ENCODE measurements at regions of chr14 and their contacts with region 1.

Region 1: DNA sequence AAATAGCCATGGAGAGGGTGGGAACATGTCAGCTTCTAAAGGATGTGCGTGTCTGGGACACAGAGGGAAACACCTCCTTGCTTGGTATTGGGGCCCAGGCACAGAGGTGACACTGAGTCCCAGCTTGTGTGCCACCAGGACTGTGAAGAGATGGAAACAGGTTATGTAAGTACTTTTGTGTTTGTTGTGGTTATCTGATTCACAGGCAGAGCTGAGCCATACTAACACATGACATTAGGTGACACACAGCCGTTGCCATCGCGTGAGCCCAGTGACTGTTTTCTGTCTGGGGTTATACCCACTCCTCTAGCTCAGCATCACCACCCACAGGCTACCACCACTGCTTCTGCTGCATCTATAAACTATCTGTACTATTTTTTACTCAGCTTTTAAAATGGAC is 12.1 kb upstream of the FLVCR2 start:
- DNase-seq: peak; percentile 84
- H3K4me3 Mint-ChIP-seq: peak overlapping the region; percentile 21
- H3K27ac Mint-ChIP-seq: peak overlapping the region; percentile 74
- H3K4me1 Mint-ChIP-seq: peaks cover 74% of the 10 kb centered on the region
- H3K27me3 Mint-ChIP-seq: no peaks in the 10 kb centered on the region

Region 2: DNA sequence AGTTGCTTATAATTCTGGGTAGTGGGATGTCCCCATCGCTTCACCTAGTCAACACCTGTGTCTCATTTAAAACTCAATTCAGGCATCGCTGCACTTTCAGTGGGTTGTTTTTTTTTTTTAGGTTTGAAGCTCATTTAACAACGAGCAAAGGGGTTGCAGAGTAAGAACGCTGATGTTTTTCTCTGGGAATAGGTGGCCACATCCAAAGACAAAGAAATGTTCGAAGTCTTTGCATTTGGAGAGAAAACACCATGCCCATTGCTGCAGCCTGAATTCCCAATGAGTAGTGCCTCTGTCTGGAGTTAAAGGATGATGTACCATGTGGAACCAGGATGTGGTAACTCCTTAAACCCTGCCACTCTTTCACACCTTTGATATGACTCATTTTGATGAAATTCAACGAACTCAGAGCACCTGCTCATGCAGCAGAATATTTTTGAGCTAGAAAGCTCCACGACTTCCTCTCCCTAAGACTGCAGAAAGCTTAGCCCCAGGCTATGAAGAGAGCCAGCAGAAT is 79.1 kb before region 1 on chr14:
- CTCF ChIA-PET with region 1: interaction called, 24 read pairs
- POLR2A ChIA-PET with region 1: interaction called, 7 read pairs
- DNase-seq: peak; percentile 40
- H3K4me3 Mint-ChIP-seq: no peak overlapping the region
- H3K27ac Mint-ChIP-seq: peak overlapping the region; percentile 61
- H3K4me1 Mint-ChIP-seq: peaks cover 39% of the 10 kb centered on the region
- H3K27me3 Mint-ChIP-seq: no peaks in the 10 kb centered on the region

Region 3: DNA sequence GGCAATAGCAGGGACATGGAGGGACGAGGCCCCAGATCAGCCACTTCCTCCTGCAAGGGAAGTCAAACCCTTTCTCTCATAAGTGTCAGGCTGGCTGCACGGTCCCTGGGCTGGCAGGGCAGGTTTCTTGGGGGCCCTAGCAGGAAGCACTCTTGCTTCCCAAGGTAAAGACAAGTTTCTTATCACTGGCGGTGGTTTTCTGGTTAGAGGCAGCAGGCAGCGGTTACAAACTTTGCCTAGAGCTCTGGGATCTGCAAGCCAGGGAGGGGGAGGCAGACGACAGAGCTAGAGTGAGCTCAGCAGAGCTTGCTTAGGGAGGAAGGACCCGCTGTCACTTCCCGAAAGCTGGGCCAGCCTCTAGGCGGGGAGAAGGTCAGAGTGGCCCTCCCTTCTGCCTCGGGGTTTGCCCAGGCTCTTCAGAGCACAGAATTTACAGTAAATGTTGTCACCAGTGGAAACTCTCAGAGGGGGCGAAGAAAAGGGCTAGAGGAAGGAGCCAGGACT is 23.7 kb before region 1 on chr14:
- CTCF ChIA-PET with region 1: interaction called, 41 read pairs
- POLR2A ChIA-PET with region 1: interaction called, 14 read pairs
- DNase-seq: peak; percentile 82
- H3K4me3 Mint-ChIP-seq: peak overlapping the region; percentile 57
- H3K27ac Mint-ChIP-seq: peak overlapping the region; percentile 99
- H3K4me1 Mint-ChIP-seq: peaks cover 77% of the 10 kb centered on the region
- H3K27me3 Mint-ChIP-seq: no peaks in the 10 kb centered on the region

Measured in activated CD4-positive, alpha-beta memory T cell treated with anti-CD3 and anti-CD28 coated beads, Interleukin-2, amount 10 ng/mL, durations not matched to agents 7 days and 5 days (primary cell).